Activated CD4-positive, alpha-beta memory T cell treated with anti-CD3 and anti-CD28 coated beads for 36 hours (primary cell): ENCODE measurements at regions of chr3 and their contacts with region 1.

Region 1: GRCh38 chr3:143119009-143119914 is at the start of gene CHST2:
- DNase-seq: peak; percentile 78
- H3K4me3 Mint-ChIP-seq: peak within 1 kb of the TSS; percentile 84
- H3K27ac Mint-ChIP-seq: peak within 1 kb of the TSS; percentile 45
- H3K4me1 Mint-ChIP-seq: peaks cover 19% of the 10 kb centered on the region
- H3K27me3 Mint-ChIP-seq: peaks cover 8% of the 10 kb centered on the region
- total RNA-seq, gene CHST2: 4.5 to 4.7 TPM

Region 2: DNA sequence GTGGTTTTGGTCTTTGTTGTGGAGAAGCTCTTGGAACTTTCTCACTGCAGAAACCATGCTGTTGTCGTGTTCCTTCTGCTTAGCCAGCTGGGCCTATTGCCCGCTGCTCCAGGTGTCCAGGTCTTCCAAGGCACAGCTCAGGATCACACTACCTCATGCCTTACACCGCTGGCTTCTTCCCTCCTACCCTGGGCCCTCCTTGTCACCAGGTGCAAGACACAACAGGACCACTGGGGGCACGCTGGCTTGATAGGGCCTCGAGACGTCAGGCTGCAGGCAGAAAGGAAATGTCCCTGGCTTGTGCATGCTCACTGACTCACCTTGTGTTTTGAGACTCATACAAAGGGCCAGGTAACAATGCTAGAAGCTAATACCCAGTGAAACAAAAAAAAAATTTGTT is 188.0 kb before region 1 on chr3:
- CTCF ChIA-PET with region 1: no interaction called
- POLR2A ChIA-PET with region 1: no interaction called
- intact Hi-C with region 1: no loop called
- DNase-seq: peak; percentile 29
- H3K4me3 Mint-ChIP-seq: no peak overlapping the region
- H3K27ac Mint-ChIP-seq: no peak overlapping the region
- H3K4me1 Mint-ChIP-seq: no peaks in the 10 kb centered on the region
- H3K27me3 Mint-ChIP-seq: peaks cover 18% of the 10 kb centered on the region

Region 3: GRCh38 chr3:143060906-143061305 is 58.4 kb before region 1 on chr3:
- CTCF ChIA-PET with region 1: no interaction called
- POLR2A ChIA-PET with region 1: no interaction called
- intact Hi-C with region 1: loop called (anchors 2 kb)
- DNase-seq: no peak
- H3K4me3 Mint-ChIP-seq: no peak overlapping the region
- H3K27ac Mint-ChIP-seq: peak overlapping the region; percentile 42
- H3K4me1 Mint-ChIP-seq: peaks cover 22% of the 10 kb centered on the region
- H3K27me3 Mint-ChIP-seq: no peaks in the 10 kb centered on the region

Region 4: DNA sequence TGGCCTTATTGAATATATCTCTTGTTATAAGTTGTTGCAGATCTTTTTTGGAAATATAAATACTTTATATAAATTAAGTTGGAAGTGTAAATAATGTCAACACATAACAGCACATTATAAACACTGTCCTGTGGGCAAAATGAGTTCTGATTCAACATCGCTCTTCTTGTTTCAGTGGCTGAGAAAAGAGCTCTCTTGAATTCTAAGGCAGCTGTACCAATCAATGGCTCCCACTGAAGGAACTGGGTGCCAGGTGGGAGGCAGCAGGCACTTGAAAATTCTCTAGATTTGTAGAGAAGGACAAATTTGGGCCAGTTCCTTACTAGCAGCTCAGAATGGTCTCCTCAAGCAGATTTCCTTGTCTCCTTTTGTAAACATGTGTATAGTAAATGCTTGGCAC is 45.9 kb after region 1 on chr3:
- CTCF ChIA-PET with region 1: interaction called, 3 read pairs
- POLR2A ChIA-PET with region 1: no interaction called
- intact Hi-C with region 1: loop called (anchors 1 kb)
- DNase-seq: no peak
- H3K4me3 Mint-ChIP-seq: peak overlapping the region; percentile 22
- H3K27ac Mint-ChIP-seq: peak overlapping the region; percentile 87
- H3K4me1 Mint-ChIP-seq: peaks cover 56% of the 10 kb centered on the region
- H3K27me3 Mint-ChIP-seq: peaks cover 2% of the 10 kb centered on the region

Region 5: GRCh38 chr3:143348486-143349327 is 229.4 kb after region 1 on chr3:
- CTCF ChIA-PET with region 1: interaction called, 4 read pairs
- POLR2A ChIA-PET with region 1: no interaction called
- intact Hi-C with region 1: loop called (anchors 5 kb)
- DNase-seq: no peak
- H3K4me3 Mint-ChIP-seq: no peak overlapping the region
- H3K27ac Mint-ChIP-seq: no peak overlapping the region
- H3K4me1 Mint-ChIP-seq: peaks cover 36% of the 10 kb centered on the region
- H3K27me3 Mint-ChIP-seq: no peaks in the 10 kb centered on the region

Region 6: DNA sequence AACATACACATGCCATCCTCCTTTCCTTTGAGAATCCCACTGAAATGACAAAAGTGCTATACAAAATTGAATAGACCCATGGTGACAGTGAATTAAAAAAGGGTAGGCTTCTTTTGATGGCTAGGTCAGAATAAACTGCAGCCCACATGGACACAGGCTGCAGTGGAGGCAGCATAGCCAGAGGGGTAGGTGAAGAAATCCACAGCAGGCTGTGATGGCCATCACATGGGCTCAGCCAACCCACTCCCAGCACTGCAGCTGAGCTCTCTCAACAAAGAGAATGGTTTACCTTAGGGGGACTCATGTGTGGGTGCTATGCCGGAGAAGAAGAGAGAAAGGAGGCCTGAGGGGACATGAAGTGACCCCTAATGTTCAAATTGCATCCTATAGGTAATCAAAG is 331.4 kb after region 1 on chr3:
- CTCF ChIA-PET with region 1: interaction called, 3 read pairs
- POLR2A ChIA-PET with region 1: no interaction called
- intact Hi-C with region 1: loop called (anchors 5 kb)
- DNase-seq: no peak
- H3K4me3 Mint-ChIP-seq: no peak overlapping the region
- H3K27ac Mint-ChIP-seq: no peak overlapping the region
- H3K4me1 Mint-ChIP-seq: peaks cover 2% of the 10 kb centered on the region
- H3K27me3 Mint-ChIP-seq: no peaks in the 10 kb centered on the region

Region 7: GRCh38 chr3:143674100-143674968 is 555.1 kb after region 1 on chr3:
- CTCF ChIA-PET with region 1: interaction called, 3 read pairs
- POLR2A ChIA-PET with region 1: no interaction called
- intact Hi-C with region 1: loop called (anchors 1 kb)
- DNase-seq: peak; percentile 84
- H3K4me3 Mint-ChIP-seq: peak overlapping the region; percentile 64
- H3K27ac Mint-ChIP-seq: no peak overlapping the region
- H3K4me1 Mint-ChIP-seq: peaks cover 8% of the 10 kb centered on the region
- H3K27me3 Mint-ChIP-seq: no peaks in the 10 kb centered on the region